Common myeloid progenitor, CD34-positive (primary cell): ENCODE measurements at regions of chr19 and their contacts with region 1.

Region 1: DNA sequence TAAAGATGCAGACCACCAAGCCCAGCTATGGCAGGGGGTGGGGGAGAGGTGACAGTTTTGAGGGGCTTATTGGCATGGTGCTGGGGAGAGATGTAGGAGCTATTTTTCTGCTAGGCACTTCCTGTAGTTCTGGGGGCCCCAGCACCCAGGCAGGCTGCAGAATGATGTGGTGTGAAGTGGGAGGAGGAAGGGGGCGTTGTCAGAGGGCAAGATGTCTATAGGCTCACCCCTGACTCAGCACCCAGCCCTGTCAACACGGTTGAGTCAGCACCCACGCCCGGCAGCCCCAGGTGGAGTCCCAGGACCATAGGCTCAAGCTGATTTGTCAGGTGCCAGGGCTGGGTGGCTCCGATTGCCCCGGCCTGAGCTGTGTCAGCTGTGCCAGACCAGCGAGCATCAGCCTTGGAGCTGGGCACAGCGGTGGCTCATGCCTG is 5.8 kb downstream of the KLF2 start:
- DNase-seq: peak; percentile 76 to 90 (median 85)
- H3K4me3 ChIP-seq: no peak overlapping the region
- H3K27ac ChIP-seq: no peak overlapping the region
- H3K4me1 ChIP-seq: peaks cover 19 to 46% (median 44%) of the 10 kb centered on the region in 4 experiments
- H3K27me3 ChIP-seq: peaks cover 0 to 13% (median 5%) of the 10 kb centered on the region in 5 experiments

Region 2: DNA sequence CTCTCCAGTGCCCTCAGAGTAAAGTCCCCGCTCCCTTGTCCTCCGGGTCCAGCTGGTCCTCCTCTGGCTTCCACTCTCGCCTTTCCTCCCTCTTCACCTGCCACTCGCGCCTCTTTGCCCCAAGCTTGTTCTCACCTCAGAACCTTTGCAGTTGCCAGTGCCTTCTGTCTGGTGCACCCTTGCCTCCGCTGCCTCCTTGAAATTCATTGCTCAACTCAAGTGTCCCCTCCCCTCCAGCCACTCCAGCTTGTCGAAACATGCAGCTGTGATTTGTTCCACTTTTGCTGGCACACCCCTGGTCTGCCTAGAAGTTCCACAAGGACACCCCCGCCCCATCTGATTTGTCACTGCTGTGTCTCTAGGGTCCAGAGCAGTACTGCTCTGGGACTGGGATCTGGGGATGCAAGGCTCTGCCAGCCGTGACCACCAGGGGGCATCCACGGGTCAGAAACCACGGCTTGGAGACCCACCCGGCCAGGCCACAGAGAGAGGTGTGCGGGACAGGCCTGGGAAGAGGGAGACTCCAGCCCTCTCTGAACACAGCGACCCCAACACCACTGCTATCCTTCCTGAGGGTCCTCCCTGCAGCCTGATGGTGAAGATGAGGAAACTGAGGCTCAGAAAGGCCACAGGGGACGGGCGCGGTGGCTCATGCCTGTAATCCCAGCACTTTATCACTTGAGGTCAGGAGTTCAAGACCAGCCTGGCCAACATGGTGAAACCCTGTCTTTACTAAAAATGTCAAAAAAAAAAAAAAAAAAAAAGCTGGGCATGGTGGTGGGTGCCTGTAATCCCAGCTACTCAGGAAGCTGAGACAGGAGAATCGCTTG is 82.8 kb before region 1 on chr19:
- CTCF ChIA-PET with region 1: interaction called, 41 read pairs
- POLR2A ChIA-PET with region 1: interaction called, 8 read pairs
- DNase-seq: peak; percentile 75 to 84 (median 77)
- H3K4me3 ChIP-seq: no peak overlapping the region
- H3K27ac ChIP-seq: no peak overlapping the region
- H3K4me1 ChIP-seq: peaks cover 0 to 2% (median 0%) of the 10 kb centered on the region in 4 experiments
- H3K27me3 ChIP-seq: no peaks in the 10 kb centered on the region

Region 3: GRCh38 chr19:16259385-16260159 is 70.8 kb before region 1 on chr19:
- CTCF ChIA-PET with region 1: interaction called, 5 read pairs
- POLR2A ChIA-PET with region 1: interaction called, 16 read pairs
- DNase-seq: peak in 1 of 3 donors; percentile 56
- H3K4me3 ChIP-seq: no peak overlapping the region
- H3K27ac ChIP-seq: no peak overlapping the region
- H3K4me1 ChIP-seq: peaks cover 2 to 56% (median 46%) of the 10 kb centered on the region in 4 experiments
- H3K27me3 ChIP-seq: no peaks in the 10 kb centered on the region

Region 4: DNA sequence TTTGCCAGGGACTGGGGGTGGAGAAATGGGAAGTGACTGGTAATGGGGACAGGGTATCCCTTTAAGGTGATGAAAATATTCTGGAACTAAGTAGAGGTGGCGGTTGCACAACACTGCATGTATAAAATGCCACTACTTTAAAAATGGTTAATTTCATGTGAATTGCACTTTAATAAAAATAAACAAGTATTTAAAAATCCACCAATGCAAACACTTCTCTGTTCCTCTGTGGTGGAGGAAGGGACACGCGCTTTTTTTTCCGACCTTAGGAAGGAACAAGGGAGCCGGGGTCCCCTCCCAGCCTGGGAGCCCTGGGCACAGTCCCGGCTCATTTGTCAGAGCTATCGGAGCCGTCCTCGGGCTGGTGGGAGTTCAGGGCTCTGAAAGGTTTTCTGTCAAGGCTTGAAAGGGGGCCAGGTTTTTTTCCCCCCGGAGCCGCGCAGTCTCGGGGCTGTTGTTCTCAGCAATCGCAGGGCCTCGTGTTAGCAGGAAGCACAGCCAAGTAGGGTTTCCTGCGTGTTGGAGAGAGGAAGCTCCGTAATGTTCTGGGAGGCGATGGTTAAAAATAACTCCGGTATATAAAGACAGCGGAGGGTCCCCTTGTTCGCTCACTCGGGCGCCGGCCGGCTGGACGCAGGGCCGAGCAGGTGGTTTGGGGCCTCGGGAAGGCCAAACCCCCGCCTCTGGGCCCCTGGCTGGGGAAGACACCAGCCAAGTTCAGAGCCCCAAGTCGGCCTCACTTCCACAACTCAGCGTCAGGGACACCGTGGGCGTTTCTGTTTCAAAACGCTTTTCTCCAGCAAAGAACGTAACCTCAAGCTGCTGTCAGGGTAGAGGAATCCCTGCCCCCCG is 46.9 kb before region 1 on chr19:
- CTCF ChIA-PET with region 1: no interaction called
- POLR2A ChIA-PET with region 1: interaction called, 29 read pairs
- DNase-seq: peak; percentile 80 to 93 (median 90)
- H3K4me3 ChIP-seq: peak overlapping the region in 5 of 7 experiments; percentile 32 to 62 (median 55)
- H3K27ac ChIP-seq: peak overlapping the region; percentile 75 to 91
- H3K4me1 ChIP-seq: peaks cover 0 to 48% (median 41%) of the 10 kb centered on the region in 4 experiments
- H3K27me3 ChIP-seq: no peaks in the 10 kb centered on the region

Region 5: GRCh38 chr19:16315825-16316505 is 14.4 kb before region 1 on chr19:
- CTCF ChIA-PET with region 1: interaction called, 7 read pairs
- POLR2A ChIA-PET with region 1: interaction called, 10 read pairs
- DNase-seq: peak; percentile 70 to 86 (median 75)
- H3K4me3 ChIP-seq: peak overlapping the region in 1 of 7 experiments; percentile 13
- H3K27ac ChIP-seq: no peak overlapping the region
- H3K4me1 ChIP-seq: peaks cover 3 to 11% (median 10%) of the 10 kb centered on the region in 4 experiments
- H3K27me3 ChIP-seq: peaks cover 0 to 5% (median 1%) of the 10 kb centered on the region in 5 experiments

Region 6: DNA sequence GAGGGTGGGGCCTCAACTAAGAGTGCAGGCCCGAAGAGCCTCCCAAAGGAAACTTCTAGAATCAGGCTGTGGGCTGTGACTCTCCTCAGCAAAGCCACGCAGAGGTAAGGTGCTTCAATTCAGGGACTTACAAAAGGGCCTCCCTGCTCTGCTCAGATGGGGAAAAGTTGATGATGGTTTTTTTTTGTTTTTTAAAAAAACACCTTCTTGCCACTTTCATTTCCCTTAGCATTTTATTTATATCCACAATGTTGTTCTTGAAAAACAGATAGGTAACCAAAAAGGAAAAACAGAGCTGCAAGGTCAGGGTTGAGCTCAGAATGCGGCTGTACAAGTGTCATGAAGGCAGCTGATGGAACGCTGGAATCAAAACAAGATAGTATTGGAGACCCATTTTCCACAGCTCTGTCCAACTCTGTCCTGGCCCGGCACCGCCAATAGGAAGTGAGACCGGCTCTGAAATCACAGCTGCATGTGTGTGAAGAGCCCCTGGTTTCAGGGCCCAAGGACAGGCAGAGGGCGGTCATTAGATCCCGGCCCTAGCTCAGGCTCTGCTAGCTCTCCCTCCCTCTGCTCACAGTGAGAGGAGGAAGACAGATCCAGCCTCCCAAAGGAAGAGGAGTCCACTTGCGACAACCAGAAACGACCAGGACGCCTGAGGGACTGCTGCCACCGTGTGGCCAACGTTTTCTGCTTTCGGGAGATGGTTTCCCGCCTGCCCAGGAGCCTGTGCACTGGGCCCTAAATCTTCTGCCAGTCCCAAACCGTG is 52.6 kb after region 1 on chr19:
- CTCF ChIA-PET with region 1: interaction called, 16 read pairs
- POLR2A ChIA-PET with region 1: interaction called, 11 read pairs
- DNase-seq: peak; percentile 67 to 80 (median 68)
- H3K4me3 ChIP-seq: no peak overlapping the region
- H3K27ac ChIP-seq: no peak overlapping the region
- H3K4me1 ChIP-seq: no peaks in the 10 kb centered on the region
- H3K27me3 ChIP-seq: no peaks in the 10 kb centered on the region

Region 7: GRCh38 chr19:16400911-16401591 is 70.7 kb after region 1 on chr19:
- CTCF ChIA-PET with region 1: no interaction called
- POLR2A ChIA-PET with region 1: no interaction called
- DNase-seq: no peak
- H3K4me3 ChIP-seq: no peak overlapping the region
- H3K27ac ChIP-seq: no peak overlapping the region
- H3K4me1 ChIP-seq: peaks cover 0 to 14% (median 2%) of the 10 kb centered on the region in 4 experiments
- H3K27me3 ChIP-seq: no peaks in the 10 kb centered on the region